AG04450 (cell line): ENCODE measurements at regions of chr16 and their contacts with region 1.

Region 1: GRCh38 chr16:20849587-20850390 is 43.5 kb downstream of the REXO5 start:
- DNase-seq: peak; percentile 41
- H3K4me3 ChIP-seq: no peak overlapping the region
- H3K27ac ChIP-seq: no peak overlapping the region
- H3K27me3 ChIP-seq: no peaks in the 10 kb centered on the region
- CTCF ChIP-seq: peak; percentile 100

Region 2: GRCh38 chr16:20866145-20866772 is 16.5 kb after region 1 on chr16:
- CTCF ChIA-PET with region 1: interaction called, 34 read pairs
- POLR2A ChIA-PET with region 1: interaction called, 4 read pairs
- DNase-seq: no peak
- H3K4me3 ChIP-seq: no peak overlapping the region
- H3K27ac ChIP-seq: peak overlapping the region; percentile 96
- H3K27me3 ChIP-seq: no peaks in the 10 kb centered on the region
- CTCF ChIP-seq: no peak

Region 3: GRCh38 chr16:20938426-20938825 is 88.6 kb after region 1 on chr16:
- CTCF ChIA-PET with region 1: no interaction called
- POLR2A ChIA-PET with region 1: interaction called, 13 read pairs
- DNase-seq: no peak
- H3K4me3 ChIP-seq: no peak overlapping the region
- H3K27ac ChIP-seq: no peak overlapping the region
- H3K27me3 ChIP-seq: peaks cover 5% of the 10 kb centered on the region
- CTCF ChIP-seq: no peak

Region 4: DNA sequence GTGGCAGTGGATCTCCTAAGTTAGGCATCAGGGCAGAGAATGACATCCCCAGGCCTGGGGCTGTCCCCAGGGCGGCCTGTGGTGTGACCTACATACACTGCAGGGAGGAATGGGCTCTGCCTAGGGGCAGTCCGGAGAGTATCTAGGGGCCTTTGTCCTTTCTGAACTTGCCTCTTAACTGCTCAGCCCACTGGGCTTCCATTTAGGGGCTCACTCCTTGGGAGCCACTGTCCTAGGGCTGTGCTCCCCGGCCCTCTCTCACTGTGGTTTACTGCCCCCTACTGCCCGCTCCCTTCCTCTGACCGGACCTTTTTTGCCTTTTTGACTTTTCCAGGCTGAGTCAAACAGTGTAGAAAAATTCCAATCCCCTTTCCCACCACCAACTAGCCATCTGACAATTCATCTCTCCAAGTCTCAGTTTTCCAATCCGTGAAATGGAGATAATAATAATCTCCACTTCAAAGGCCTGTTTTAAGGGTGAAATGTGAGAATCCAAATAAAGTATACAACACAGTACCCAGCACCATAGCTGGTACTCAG is 234.0 kb after region 1 on chr16:
- CTCF ChIA-PET with region 1: interaction called, 59 read pairs
- POLR2A ChIA-PET with region 1: no interaction called
- DNase-seq: no peak
- H3K4me3 ChIP-seq: no peak overlapping the region
- H3K27ac ChIP-seq: no peak overlapping the region
- H3K27me3 ChIP-seq: no peaks in the 10 kb centered on the region
- CTCF ChIP-seq: peak; percentile 72

Region 5: GRCh38 chr16:21158208-21159110 is 308.7 kb after region 1 on chr16 and contains the start of gene LDAF1:
- CTCF ChIA-PET with region 1: interaction called, 35 read pairs
- POLR2A ChIA-PET with region 1: no interaction called
- DNase-seq: no peak
- H3K4me3 ChIP-seq: peak within 1 kb of the TSS; percentile 77
- H3K27ac ChIP-seq: peak within 1 kb of the TSS; percentile 78
- H3K27me3 ChIP-seq: no peaks in the 10 kb centered on the region
- CTCF ChIP-seq: no peak
- polyA plus RNA-seq, gene LDAF1: 42.5 and 50.3 TPM in 2 replicates

Region 6: DNA sequence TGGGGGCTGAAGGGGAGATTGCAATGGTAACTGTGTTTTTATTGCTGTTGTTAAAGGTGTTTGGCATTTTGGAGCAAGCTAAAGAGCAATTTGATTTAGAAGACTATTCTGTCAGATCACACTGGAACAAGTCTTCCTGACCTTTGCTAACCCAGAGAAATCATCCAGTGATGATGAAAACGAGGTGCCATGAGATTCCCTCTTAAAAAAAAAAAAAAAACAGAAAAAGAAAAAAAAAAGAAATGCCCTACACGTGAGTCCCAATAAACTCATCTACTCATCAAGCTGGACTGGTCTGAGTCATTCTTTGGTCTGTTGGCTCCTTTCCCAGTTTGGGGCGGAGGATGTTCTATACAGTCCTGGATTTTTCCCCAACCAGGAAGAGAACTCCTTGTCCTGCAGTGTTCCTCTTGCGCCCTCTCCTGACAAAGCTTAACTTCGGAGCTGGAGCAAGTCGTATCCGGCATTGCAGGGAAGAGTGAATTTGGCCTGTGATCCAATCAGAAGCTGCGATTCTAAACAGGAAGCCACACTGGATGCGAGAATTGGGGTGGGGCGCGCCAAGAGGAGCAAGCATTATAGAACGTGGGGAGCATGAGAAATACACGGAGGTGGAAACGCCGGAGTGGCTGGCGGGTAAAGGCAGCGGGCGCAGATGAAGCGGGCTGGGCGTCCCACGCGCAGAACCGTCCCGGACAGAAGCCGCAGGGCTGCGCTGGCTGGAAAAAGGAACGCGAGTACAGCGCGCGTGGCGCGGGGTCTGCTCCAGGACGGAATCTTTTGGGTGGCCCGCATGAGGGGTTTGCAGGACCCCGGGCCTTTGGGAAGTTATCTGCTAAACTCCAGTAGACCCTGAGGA is 450.7 kb after region 1 on chr16:
- CTCF ChIA-PET with region 1: interaction called, 37 read pairs
- POLR2A ChIA-PET with region 1: interaction called, 10 read pairs
- DNase-seq: peak; percentile 100
- H3K4me3 ChIP-seq: peak overlapping the region; percentile 79
- H3K27ac ChIP-seq: peak overlapping the region; percentile 59
- H3K27me3 ChIP-seq: no peaks in the 10 kb centered on the region
- CTCF ChIP-seq: peak; percentile 94